AG04449 (cell line): ENCODE measurements at regions of chr17 and their contacts with region 1.

Region 1: GRCh38 chr17:59331129-59331928 is at the start of gene YPEL2:
- DNase-seq: peak; percentile 65
- H3K4me3 ChIP-seq: peak within 1 kb of the TSS; percentile 75
- CTCF ChIP-seq: no peak

Region 2: GRCh38 chr17:59311130-59311920 is 20.0 kb before region 1 on chr17:
- CTCF ChIA-PET with region 1: interaction called, 25 read pairs
- POLR2A ChIA-PET with region 1: no interaction called
- DNase-seq: peak; percentile 5
- H3K4me3 ChIP-seq: no peak overlapping the region
- CTCF ChIP-seq: no peak

Region 3: DNA sequence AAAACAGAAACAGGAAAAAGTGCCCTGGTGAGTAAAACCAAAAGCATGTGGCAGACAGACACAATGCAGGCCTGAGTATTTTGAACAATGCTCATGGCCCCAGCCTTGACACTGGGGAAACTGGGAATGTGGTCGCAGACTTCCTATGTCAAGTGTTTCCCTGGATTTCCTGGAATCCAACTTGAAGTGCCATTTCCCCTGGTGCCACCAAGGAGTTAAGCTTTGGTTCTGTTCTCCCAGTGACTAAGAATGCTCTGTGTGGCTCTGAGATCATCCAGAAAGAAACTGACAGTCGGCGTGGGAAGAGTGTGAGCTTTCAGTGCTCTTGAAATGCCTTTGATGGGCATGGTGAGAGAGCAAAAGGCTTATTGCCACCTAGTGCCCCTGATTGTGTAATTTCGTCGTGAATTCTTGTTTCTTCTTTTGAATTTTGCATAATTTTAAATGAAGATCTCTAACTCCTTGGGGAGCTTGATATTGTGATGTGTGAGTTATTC is 96.1 kb after region 1 on chr17:
- CTCF ChIA-PET with region 1: interaction called, 26 read pairs
- POLR2A ChIA-PET with region 1: interaction called, 3 read pairs
- DNase-seq: no peak
- H3K4me3 ChIP-seq: no peak overlapping the region
- CTCF ChIP-seq: no peak

Region 4: GRCh38 chr17:59440784-59441441 is 109.6 kb after region 1 on chr17:
- CTCF ChIA-PET with region 1: interaction called, 342 read pairs
- POLR2A ChIA-PET with region 1: no interaction called
- DNase-seq: peak; percentile 63
- H3K4me3 ChIP-seq: no peak overlapping the region
- CTCF ChIP-seq: peak; percentile 85

Region 5: DNA sequence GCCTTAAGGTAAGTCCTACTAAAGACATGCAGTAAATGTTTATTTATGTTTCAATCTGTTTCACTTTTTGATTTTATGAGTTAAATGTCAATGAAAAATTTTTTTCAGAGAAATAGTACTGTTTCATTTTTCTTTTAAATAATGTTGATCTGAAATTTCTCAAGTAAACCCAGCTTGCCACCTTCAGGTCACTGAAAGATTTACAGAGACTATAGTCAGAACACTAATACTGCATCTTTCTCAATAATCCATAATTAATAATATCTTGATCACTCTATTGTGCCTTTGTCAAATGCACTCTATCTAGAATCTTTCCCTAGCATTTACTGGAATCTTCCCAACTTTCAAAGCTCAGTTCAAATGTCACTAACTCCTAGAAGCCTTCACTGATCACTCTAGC is 227.6 kb after region 1 on chr17:
- CTCF ChIA-PET with region 1: interaction called, 10 read pairs
- POLR2A ChIA-PET with region 1: no interaction called
- DNase-seq: no peak
- H3K4me3 ChIP-seq: no peak overlapping the region
- CTCF ChIP-seq: peak; percentile 19